SK-N-SH (cell line): ENCODE measurements at regions of chr3 and their contacts with region 1.

Region 1: GRCh38 chr3:128408693-128409623 is 57.7 kb downstream of the DNAJB8 start:
- DNase-seq: peak; percentile 84
- H3K4me3 ChIP-seq: peak overlapping the region in 1 of 2 experiments; percentile 34; a peak in 1 of 4 replicates
- H3K27ac ChIP-seq: peak overlapping the region in 1 of 2 experiments; percentile 100; a peak in 2 of 4 replicates
- H3K4me1 ChIP-seq: peaks cover 0 to 93% of the 10 kb centered on the region in 2 experiments; a peak in 2 of 4 replicates
- H3K27me3 ChIP-seq: no peaks in the 10 kb centered on the region
- CTCF ChIP-seq: peak; percentile 32; the same call in 1 of the 2 replicates
- EP300 ChIP-seq: peak in 1 of 2 experiments; percentile 100; a peak in 2 of 4 replicates
- RAD21 ChIP-seq: peak; percentile 38

Region 2: GRCh38 chr3:127556565-127556964 is 852.4 kb before region 1 on chr3:
- CTCF ChIA-PET with region 1: no interaction called
- POLR2A ChIA-PET with region 1: no interaction called
- DNase-seq: no peak
- H3K4me3 ChIP-seq: no peak overlapping the region
- H3K27ac ChIP-seq: no peak overlapping the region
- H3K4me1 ChIP-seq: peaks cover 0 to 13% of the 10 kb centered on the region in 2 experiments; a peak in 2 of 4 replicates
- H3K27me3 ChIP-seq: no peaks in the 10 kb centered on the region
- CTCF ChIP-seq: peak; percentile 32
- EP300 ChIP-seq: no peak
- RAD21 ChIP-seq: 0 out of 2 replicates have a peak, but pooled peaks have one; percentile 8

Region 3: DNA sequence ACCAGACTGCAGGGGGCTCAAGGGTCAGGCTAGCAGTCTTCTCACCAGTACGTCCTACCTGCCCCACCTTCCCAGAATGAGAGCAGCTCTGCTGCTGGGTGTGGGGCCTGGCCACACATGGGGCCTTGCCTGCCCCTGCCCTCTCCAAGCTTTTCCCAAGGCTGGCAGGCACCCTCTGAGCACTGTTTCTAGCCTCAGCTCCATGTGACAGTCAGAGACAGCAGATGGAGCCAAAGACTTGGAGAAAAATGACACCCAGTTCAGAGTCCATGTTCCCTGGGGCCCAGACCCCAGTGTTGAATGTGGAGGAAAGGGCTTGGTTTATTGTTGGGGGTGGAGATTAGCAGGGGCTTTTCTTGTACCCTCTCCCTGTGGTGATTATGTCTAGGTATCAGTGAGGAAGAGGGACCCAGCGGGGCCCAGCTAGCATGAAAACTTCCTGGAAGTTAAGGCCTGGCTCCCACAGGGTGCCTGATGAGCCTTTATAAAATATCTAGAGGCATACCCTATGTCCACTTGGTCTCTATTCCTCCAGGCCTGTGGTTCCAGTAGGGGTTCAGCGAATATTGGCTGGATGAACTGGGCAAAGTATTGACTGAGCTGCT is 101.8 kb before region 1 on chr3:
- CTCF ChIA-PET with region 1: interaction called, 26 read pairs
- POLR2A ChIA-PET with region 1: interaction called, 6 read pairs
- DNase-seq: peak; percentile 58
- H3K4me3 ChIP-seq: no peak overlapping the region
- H3K27ac ChIP-seq: peak overlapping the region in 1 of 2 experiments; percentile 67; a peak in 2 of 4 replicates
- H3K4me1 ChIP-seq: peaks cover 0 to 26% of the 10 kb centered on the region in 2 experiments; a peak in 2 of 4 replicates
- H3K27me3 ChIP-seq: no peaks in the 10 kb centered on the region
- CTCF ChIP-seq: no peak; the same call in 1 of the 2 replicates
- EP300 ChIP-seq: no peak
- RAD21 ChIP-seq: peak; percentile 89

Region 4: GRCh38 chr3:128395500-128396162 is 13.3 kb before region 1 on chr3:
- CTCF ChIA-PET with region 1: interaction called, 44 read pairs
- POLR2A ChIA-PET with region 1: interaction called, 21 read pairs
- DNase-seq: peak; percentile 72
- H3K4me3 ChIP-seq: no peak overlapping the region
- H3K27ac ChIP-seq: peak overlapping the region in 1 of 2 experiments; percentile 97; a peak in 2 of 4 replicates
- H3K4me1 ChIP-seq: peaks cover 3 to 95% of the 10 kb centered on the region in 2 experiments; a peak in 2 of 4 replicates
- H3K27me3 ChIP-seq: no peaks in the 10 kb centered on the region
- CTCF ChIP-seq: no peak
- EP300 ChIP-seq: no peak
- RAD21 ChIP-seq: 0 out of 2 replicates have a peak, but pooled peaks have one; percentile 11

Region 5: GRCh38 chr3:128464188-128464587 is 55.2 kb after region 1 on chr3:
- CTCF ChIA-PET with region 1: interaction called, 7 read pairs
- POLR2A ChIA-PET with region 1: interaction called, 66 read pairs
- DNase-seq: no peak
- H3K4me3 ChIP-seq: no peak overlapping the region
- H3K27ac ChIP-seq: no peak overlapping the region
- H3K4me1 ChIP-seq: peaks cover 0 to 58% of the 10 kb centered on the region in 2 experiments; a peak in 1 of 4 replicates
- H3K27me3 ChIP-seq: peaks cover 5% of the 10 kb centered on the region; the same call in 1 of the 2 replicates
- CTCF ChIP-seq: peak; percentile 16; the same call in 1 of the 2 replicates
- EP300 ChIP-seq: no peak
- RAD21 ChIP-seq: no peak; the same call in 1 of the 2 replicates

Region 6: DNA sequence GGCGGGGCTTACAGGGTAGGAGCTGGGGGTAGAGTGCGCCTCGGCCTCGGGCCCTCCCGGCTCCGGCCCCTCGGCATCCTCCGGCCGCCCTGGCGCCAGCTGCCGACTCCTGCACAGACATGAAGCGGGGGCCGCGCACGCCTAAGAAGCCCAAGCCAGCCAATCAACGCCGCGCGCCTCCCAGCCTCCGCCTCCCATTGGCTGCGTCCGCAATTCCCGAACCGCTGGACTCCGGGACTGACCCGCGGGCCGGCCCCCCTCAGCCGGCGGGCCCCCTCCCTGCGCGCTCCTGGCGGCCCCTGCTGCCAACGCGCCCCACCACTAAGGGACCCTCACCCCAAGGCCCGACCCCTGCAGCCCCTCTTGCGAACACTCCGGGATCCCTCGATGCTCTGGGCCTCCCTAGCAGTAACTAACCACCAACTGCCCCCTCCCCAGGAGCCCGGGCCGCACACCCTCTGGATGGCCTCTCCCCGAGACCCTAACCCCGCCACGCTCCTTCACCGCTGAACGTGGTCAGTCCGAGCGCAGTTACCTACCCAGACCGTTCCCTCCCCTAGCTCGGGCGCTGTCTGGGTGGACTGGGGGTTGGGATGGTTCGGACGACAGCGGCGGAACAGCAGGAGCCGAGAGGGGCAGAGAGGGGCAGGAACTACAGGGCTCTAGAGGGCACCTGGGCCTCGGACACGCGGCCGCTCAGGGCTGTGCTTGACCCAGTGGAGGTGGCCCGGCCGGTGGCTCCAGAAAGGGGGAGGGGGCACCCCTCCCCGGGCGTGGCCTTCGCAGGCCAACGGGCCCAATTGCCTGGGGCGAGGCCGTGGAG is 79.1 kb after region 1 on chr3:
- CTCF ChIA-PET with region 1: interaction called, 40 read pairs
- POLR2A ChIA-PET with region 1: interaction called, 100 read pairs
- DNase-seq: peak; percentile 82
- H3K4me3 ChIP-seq: peak overlapping the region; percentile 75 to 77
- H3K27ac ChIP-seq: peak overlapping the region; percentile 36 to 97
- H3K4me1 ChIP-seq: peaks cover 4 to 8% of the 10 kb centered on the region in 2 experiments; a peak in 3 of 4 replicates
- H3K27me3 ChIP-seq: peaks cover 23% of the 10 kb centered on the region; the same call in 1 of the 2 replicates
- CTCF ChIP-seq: no peak
- EP300 ChIP-seq: no peak
- RAD21 ChIP-seq: no peak